Activated CD8-positive, alpha-beta T cell treated with anti-CD3 and anti-CD28 coated beads, Interleukin-2, amount 10 ng/mL, durations not matched to agents 7 days and 5 days (primary cell): ENCODE measurements at regions of chr1 and their contacts with region 1.

Region 1: GRCh38 chr1:224513787-224514209 is 79.2 kb upstream of the WDR26 start:
- DNase-seq: peak; percentile 91
- ATAC-seq: peak; percentile 97
- H3K4me3 Mint-ChIP-seq: no peak overlapping the region
- H3K27ac Mint-ChIP-seq: no peak overlapping the region
- H3K4me1 Mint-ChIP-seq: peaks cover 27% of the 10 kb centered on the region
- H3K27me3 Mint-ChIP-seq: no peaks in the 10 kb centered on the region

Region 2: DNA sequence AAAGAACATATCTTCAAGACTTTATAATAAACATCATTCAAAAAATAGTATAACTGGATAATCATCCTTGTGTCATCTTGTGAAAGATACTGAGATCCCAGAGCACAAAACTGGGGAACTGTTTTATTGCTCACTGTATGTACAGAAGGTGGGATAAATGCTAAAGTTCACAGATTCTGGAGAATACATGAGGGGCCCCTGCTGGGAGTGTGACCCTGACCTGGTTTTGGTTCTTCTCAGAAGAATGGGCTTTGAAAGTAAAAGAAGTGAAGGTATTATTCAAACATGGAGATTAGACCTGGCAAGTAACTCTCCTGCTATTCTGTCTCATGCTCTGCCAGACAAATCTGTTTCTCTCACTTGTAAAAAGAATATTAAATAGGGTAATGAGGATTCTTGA is 93.7 kb before region 1 on chr1:
- CTCF ChIA-PET with region 1: no interaction called
- POLR2A ChIA-PET with region 1: no interaction called
- DNase-seq: no peak
- ATAC-seq: no peak
- H3K4me3 Mint-ChIP-seq: no peak overlapping the region
- H3K27ac Mint-ChIP-seq: no peak overlapping the region
- H3K4me1 Mint-ChIP-seq: peaks cover 6% of the 10 kb centered on the region
- H3K27me3 Mint-ChIP-seq: no peaks in the 10 kb centered on the region

Region 3: GRCh38 chr1:224430511-224431113 is 83.2 kb before region 1 on chr1:
- CTCF ChIA-PET with region 1: no interaction called
- POLR2A ChIA-PET with region 1: no interaction called
- DNase-seq: peak; percentile 62
- ATAC-seq: no peak
- H3K4me3 Mint-ChIP-seq: peak overlapping the region; percentile 62
- H3K27ac Mint-ChIP-seq: peak overlapping the region; percentile 80
- H3K4me1 Mint-ChIP-seq: peaks cover 51% of the 10 kb centered on the region
- H3K27me3 Mint-ChIP-seq: no peaks in the 10 kb centered on the region

Region 4: GRCh38 chr1:224503161-224504118 is 10.4 kb before region 1 on chr1:
- CTCF ChIA-PET with region 1: interaction called, 34 read pairs
- POLR2A ChIA-PET with region 1: interaction called, 7 read pairs
- DNase-seq: peak; percentile 39
- ATAC-seq: no peak
- H3K4me3 Mint-ChIP-seq: no peak overlapping the region
- H3K27ac Mint-ChIP-seq: peak overlapping the region; percentile 80
- H3K4me1 Mint-ChIP-seq: peaks cover 56% of the 10 kb centered on the region
- H3K27me3 Mint-ChIP-seq: no peaks in the 10 kb centered on the region

Region 5: GRCh38 chr1:224615861-224616755 is 102.3 kb after region 1 on chr1 and contains the start of gene CNIH3:
- CTCF ChIA-PET with region 1: interaction called, 15 read pairs
- POLR2A ChIA-PET with region 1: no interaction called
- DNase-seq: peak; percentile 53
- ATAC-seq: peak; percentile 78
- H3K4me3 Mint-ChIP-seq: peak within 1 kb of the TSS; percentile 52
- H3K27ac Mint-ChIP-seq: no peak within 1 kb of the TSS
- H3K4me1 Mint-ChIP-seq: peaks cover 24% of the 10 kb centered on the region
- H3K27me3 Mint-ChIP-seq: peaks cover 63% of the 10 kb centered on the region
- total RNA-seq, gene CNIH3: 1.5 to 2.5 TPM

Region 6: DNA sequence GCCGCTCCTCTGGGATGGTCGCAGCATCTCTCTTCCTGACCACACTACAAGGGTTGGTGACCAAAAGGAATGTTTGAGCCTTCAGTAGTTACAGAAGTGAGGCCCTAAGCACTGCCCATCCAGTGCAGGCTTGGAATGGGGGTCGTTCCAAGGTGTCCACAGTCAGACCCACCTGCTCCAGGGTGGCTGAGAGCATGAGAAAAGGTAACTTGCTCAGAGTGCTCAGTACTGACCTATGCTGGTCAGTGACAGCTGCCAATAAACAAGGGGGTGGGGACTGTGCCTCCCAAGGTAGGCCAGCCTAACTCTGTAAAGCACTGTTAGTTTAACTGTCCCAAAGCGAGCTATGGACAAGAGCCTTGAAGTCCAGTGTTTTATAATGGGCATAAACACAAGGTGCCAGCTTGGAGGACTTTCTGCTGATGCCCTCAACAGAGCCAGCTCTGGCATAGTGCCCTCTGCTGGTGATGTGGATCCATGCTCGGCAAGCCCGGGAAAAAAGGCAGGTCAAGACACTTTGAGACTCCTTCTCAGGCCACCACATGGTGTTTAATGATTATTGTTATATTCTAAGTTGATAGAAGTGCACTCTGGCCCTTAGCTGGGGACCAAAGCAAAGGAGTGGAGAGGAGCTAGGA is 337.5 kb after region 1 on chr1:
- CTCF ChIA-PET with region 1: interaction called, 75 read pairs
- POLR2A ChIA-PET with region 1: no interaction called
- DNase-seq: peak; percentile 66
- ATAC-seq: peak; percentile 67
- H3K4me3 Mint-ChIP-seq: no peak overlapping the region
- H3K27ac Mint-ChIP-seq: no peak overlapping the region
- H3K4me1 Mint-ChIP-seq: no peaks in the 10 kb centered on the region
- H3K27me3 Mint-ChIP-seq: peaks cover 3% of the 10 kb centered on the region